Left colon (tissue), 2 donors: ENCODE measurements at regions of chr3 and their contacts with region 1.

Region 1: DNA sequence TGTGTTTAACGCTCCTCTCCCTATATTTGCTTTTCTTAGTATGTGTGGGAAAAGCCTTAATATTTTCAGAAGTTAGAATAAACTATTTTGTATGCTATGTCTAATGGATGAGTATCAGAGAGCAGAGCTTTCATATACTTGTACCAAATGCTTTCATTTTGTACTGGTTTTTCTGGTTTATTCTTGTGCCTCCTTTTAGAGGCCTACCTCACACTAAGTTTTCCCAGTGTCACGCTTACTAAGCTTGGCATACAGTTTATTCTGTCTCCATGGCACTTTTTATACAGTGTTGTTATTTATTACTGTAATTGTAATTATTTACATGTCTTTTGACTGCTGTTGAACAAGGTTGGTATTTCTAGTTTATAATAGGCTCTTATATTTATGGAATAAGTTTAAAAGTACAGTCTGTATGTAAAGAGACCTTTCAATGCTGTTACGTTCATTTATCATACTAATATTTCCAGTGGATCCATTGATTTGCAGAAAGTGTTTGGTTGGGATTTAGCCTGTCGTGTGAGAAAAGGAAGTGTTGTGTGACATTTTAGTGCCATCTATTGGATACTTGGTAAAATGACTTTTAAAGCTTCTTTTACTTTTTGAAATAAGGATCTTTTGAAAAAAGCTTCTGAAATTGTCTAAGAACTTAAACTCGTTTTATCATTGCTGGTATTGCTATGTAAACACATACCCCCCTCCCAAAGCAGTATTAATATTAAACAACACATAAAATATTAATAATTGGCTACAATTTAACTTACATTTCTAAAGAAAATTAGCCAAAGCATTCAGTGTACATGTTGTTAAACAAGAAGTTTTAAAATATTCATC is 5.2 kb upstream of the EBLN2 start:
- DNase-seq: no peak
- ATAC-seq: peak; percentile 50

Region 2: DNA sequence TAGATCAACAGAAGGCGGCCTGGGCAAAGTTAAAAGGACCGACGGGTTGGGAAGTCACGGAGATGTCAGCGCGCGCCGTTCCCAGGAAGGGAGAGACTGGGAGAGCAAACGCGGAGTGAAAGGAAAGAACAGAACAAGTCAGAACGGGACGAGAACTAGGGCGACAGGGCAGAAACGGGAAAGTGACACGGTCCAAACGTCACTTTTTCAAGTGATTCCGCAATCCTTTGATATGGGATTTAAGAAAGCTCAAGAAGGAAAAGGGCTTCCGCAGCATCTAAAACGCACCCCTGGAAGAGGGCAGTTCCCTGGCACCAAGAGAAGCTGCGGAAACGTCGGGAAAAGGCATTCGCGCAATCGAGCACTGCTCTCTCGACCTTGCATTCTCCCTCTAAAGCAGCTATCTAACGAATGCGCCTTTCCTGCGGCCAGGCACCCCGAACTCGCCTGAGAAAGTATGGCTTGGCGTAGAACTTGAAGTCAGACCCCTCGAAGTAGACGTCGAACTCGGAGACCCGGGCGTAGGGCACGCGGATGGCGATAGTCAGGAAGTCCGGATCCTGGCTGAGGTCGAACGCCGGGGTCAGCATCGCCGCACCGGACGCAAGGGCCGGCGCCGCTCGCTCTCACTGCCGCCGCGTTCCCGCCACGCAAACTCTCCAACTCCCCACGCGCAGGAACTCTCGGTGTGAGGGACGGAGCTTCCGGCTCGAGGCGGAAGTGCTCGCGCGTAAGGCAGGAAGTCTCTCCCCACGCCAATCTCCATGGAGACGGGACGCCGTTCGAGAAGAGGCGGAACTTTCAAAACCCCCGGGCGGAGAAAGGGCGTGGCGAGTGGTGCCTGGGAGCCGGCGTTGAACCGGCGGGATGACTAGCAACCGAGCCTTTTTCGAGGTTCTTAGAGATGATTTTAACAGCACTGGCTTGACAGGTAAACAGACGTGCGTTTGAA is 208.2 kb before region 1 on chr3 and contains the start of gene SHQ1:
- intact Hi-C with region 1: loop called in 1 of 2 experiments (anchors 10 kb)
- DNase-seq: peak; percentile 96 to 99
- ATAC-seq: peak; percentile 97
- total RNA-seq, gene SHQ1: 21.5 to 22.0 TPM

Region 3: DNA sequence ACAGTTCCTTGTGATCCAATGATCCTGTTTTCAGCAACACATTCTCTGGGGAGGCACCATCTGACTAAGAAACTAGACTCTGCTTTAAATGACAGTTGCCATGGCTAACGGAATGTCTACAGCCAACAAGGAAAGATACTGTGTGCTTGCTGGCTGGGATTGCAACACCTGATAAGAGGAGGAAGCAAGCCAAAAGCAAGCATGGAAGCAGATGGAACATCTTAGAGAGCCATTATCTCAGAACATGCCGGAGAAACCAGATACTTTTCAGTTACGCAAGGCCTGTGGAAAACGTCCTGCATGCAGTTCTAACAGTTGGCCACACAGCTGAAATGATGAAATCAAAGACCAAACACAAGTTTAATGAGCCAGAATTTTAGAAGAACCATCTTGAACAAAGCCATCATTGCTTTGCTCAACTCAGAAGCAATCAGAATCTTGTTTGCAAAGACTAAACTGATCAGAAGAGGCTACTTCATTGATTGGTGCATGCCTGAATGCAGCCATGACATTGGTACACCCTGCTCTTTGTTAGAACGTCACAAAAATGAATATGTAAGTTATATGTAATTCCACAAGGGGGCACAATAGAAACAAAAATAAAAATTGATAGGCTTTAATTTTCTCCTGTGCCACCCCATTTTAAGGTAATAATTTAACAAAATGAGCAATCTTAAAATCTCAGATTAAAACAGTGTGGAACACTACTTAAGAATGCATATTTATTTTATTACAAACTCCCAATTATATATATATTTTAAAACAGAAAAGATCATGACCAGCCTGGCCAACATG is 117.6 kb before region 1 on chr3:
- intact Hi-C with region 1: loop called in 1 of 2 experiments (anchors 10 kb)
- DNase-seq: no peak
- ATAC-seq: peak; percentile 72